ENCODE measurements at regions of chr12 and their contacts with region 1.

Region 1: GRCh38 chr12:53115112-53115890 is 12.0 kb downstream of the SOAT2 start:
- DNase-seq: no peak
- ATAC-seq: peak; percentile 62
- H3K4me3 ChIP-seq: no peak overlapping the region
- H3K27ac ChIP-seq: peak overlapping the region; percentile 73 to 99
- H3K4me1 ChIP-seq: no peaks in the 10 kb centered on the region
- H3K27me3 ChIP-seq: no peaks in the 10 kb centered on the region

Region 2: GRCh38 chr12:53005986-53006809 is 109.1 kb before region 1 on chr12 and contains the start of gene EIF4B:
- intact Hi-C with region 1: no loop called
- DNase-seq: peak; percentile 100
- ATAC-seq: peak; percentile 98
- H3K4me3 ChIP-seq: peak within 1 kb of the TSS; percentile 61 to 95
- H3K27ac ChIP-seq: peak within 1 kb of the TSS in 1 of 2 donors; percentile 53
- H3K4me1 ChIP-seq: peaks cover 0 to 2% of the 10 kb centered on the region in 2 donors
- H3K27me3 ChIP-seq: no peaks in the 10 kb centered on the region
- total RNA-seq, gene EIF4B: 353 to 439 TPM

Region 3: DNA sequence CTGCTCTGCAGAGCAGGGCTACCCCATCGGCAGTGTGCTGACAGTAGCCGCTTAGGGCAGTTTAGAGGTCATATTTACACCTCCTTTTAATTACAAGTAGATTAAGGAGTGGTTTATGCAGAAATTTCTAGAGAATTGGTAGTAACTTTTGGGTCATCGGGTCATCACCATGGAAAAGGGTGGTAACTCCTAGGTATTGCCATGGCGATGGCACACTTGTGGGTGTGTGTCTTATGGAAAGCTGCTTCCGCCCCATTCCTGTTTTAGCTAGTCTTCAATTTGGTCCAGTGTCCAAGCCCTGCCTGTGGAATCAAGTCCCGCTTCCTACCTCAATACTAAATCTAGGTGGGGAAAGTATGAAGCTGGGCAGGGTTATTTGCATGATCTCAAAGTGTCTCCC is 35.7 kb after region 1 on chr12:
- intact Hi-C with region 1: loop called (anchors 5 kb)
- DNase-seq: no peak
- ATAC-seq: no peak
- H3K4me3 ChIP-seq: no peak overlapping the region
- H3K27ac ChIP-seq: no peak overlapping the region
- H3K4me1 ChIP-seq: no peaks in the 10 kb centered on the region
- H3K27me3 ChIP-seq: no peaks in the 10 kb centered on the region